Vagina (tissue), 2 donors: ENCODE measurements at regions of chr9 and their contacts with region 1.

Region 1: GRCh38 chr9:87834357-87834756 is 48.3 kb upstream of the SPATA31E1 start:
- DNase-seq: no peak
- H3K4me3 ChIP-seq: no peak overlapping the region
- H3K27ac ChIP-seq: no peak overlapping the region
- H3K4me1 ChIP-seq: no peaks in the 10 kb centered on the region
- H3K27me3 ChIP-seq: no peaks in the 10 kb centered on the region
- CTCF ChIP-seq: no peak
- POLR2A ChIP-seq: no peak

Region 2: DNA sequence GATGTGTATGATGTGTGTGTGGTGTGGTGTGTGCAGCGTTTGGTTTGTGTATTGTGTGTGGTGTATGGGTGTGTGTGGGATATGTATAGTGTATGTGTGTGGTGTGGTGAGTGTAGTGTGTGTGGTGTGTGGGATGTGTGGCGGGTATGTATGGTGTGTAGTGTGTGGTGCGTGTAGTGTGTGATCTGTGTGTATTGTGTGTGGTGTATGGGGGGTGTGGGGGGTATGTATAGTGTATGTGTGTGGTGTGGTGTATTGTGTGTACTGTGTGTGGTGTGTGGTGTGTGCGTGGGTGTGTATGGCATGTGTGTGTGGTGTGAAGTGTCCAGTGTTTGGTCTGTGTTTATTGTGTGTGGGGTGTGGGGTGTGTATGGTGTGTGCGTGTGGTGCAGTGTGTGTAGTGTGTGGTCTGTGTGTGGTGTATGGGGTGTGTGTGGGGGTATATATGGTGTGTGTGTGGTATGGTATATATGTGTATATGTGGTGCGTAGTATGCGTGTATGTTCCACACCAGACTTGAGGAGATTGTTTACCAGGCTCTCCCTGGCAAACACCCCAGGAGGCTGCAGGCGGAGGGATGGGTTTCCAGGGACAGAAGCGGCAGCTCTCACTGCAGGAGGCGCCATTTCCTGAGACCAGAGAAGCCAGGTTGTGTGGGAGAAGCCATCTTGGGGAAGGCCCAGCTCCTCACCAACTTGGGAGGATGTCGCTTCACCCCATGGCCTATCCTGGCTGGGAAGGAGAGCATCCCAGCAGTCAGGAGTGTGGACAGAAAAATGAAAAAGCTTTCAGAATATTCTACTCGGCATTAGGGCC is 838.7 kb after region 1 on chr9:
- intact Hi-C with region 1: loop called (anchors 5 kb)
- DNase-seq: no peak
- H3K4me3 ChIP-seq: no peak overlapping the region
- H3K27ac ChIP-seq: no peak overlapping the region
- H3K4me1 ChIP-seq: no peaks in the 10 kb centered on the region
- H3K27me3 ChIP-seq: no peaks in the 10 kb centered on the region
- CTCF ChIP-seq: no peak
- POLR2A ChIP-seq: no peak